ENCODE measurements at regions of chr22 and their contacts with region 1.

Region 1: DNA sequence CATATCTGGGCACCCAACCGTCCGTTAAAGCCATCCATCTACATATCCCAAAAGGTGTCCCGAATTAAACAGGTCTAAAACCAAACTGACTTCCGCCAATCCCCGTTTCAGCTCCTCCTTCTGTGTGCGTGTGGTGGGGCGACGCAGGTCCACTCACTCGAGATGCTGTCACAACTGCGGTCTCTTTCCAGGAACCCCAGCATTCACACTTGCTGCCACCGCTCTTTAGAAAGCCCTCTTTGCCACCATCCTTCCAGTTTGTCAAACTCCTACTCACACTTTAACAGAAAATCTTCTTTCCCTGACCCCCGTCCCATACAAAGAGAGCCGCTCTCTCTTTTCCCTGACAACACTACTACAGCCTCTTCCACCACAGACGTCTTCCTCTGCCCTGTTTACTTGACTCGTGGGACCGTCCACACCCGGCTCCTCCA is 467 bp downstream of the ESS2 start:
- DNase-seq: peak; percentile 48
- ATAC-seq: peak; percentile 27
- H3K4me3 Mint-ChIP-seq: peak overlapping the region; percentile 95
- H3K27ac Mint-ChIP-seq: peak overlapping the region; percentile 97
- H3K4me1 Mint-ChIP-seq: peaks cover 11% of the 10 kb centered on the region
- H3K27me3 Mint-ChIP-seq: peaks cover 31% of the 10 kb centered on the region

Region 2: DNA sequence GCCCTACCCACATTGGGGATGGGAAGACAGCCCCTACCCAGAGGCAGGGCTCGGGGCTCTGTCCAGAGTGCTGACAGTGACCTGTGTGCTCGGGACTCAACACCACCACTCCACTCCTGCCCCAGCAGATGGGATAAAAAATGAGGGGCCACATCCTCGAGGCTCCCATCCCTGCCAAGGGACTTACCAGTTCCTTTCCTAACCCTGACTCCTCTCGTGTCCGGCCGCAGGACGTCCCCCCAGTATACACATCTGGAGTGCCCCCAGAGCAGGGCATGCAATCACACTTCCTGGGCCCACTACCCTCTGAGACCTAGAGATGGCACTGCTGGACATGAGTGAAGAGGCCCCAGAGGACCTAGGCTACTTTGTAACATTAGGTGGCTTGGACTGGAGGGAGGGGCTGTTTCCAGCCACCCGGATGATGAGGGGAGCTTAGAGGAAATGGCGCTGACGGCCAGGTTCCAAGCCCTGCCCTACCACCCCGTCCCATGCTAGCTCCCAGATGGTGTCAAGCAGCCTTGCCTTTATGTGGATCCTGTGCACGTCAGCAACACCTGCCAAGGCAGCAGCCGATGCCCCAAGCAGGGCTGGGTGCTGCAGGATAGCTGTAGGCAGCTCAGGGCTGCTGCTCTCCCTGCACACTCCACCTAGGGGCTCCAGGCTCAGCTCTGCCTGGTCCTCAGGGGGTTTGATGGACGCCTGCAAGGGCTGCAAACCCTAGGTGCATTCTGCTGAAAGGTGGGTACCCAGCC is 108.3 kb before region 1 on chr22:
- POLR2A ChIA-PET with region 1: no interaction called
- DNase-seq: no peak
- ATAC-seq: no peak
- H3K4me3 Mint-ChIP-seq: no peak overlapping the region
- H3K27ac Mint-ChIP-seq: no peak overlapping the region
- H3K4me1 Mint-ChIP-seq: no peaks in the 10 kb centered on the region
- H3K27me3 Mint-ChIP-seq: peaks cover 4% of the 10 kb centered on the region

Region 3: GRCh38 chr22:19122143-19122751 is 21.7 kb before region 1 on chr22 and contains the start of gene DGCR2:
- POLR2A ChIA-PET with region 1: interaction called, 23 read pairs
- DNase-seq: peak; percentile 97
- ATAC-seq: peak; percentile 92
- H3K4me3 Mint-ChIP-seq: peak within 1 kb of the TSS; percentile 92
- H3K27ac Mint-ChIP-seq: peak within 1 kb of the TSS; percentile 85
- H3K4me1 Mint-ChIP-seq: peaks cover 34% of the 10 kb centered on the region
- H3K27me3 Mint-ChIP-seq: no peaks in the 10 kb centered on the region
- total RNA-seq, gene DGCR2: 38.0 to 38.3 TPM

Region 4: DNA sequence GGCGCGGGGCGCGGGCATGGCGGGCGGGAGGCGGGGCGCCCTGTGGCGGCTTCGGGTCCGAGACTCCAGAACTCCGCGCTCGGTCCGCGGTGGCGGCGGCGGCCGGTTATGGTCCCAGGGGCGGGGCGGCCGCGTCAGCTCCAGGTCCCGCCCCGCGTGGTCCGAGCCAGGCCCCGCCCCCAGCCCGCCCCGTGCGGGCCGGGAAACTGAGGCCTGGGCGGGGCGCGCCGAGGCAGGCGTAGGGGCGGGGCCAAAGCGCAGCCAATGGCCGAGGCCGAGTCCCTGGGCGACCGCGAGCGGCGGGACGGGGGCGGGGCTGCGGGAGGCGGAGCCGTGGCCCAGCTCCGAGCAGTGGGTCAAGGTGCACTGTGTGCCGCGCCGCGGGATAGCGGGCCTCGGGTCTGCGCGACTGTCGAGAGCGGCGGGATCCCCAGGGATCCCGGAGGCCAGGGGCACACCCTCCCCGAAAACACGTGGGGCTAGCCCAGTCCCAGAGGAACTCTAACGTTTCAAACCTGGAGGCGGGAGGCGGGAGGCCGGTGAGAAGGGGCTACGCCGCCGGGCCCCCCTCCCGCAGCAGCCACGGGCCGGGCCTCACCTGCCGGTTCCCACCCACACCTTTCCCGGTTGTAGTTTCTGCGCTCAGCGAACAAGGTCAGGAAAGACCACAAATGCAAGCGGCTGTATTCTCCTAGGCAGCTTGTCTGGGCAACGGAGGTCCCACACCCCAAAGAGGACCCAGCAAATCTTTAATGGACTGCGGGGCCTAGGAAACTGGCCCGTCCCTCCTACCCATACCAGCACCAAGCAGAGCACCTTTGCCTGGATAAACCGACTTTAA is 34.9 kb after region 1 on chr22 and contains the start of gene SLC25A1:
- POLR2A ChIA-PET with region 1: interaction called, 12 read pairs
- DNase-seq: peak; percentile 94
- ATAC-seq: peak; percentile 79
- H3K4me3 Mint-ChIP-seq: peak within 1 kb of the TSS; percentile 80
- H3K27ac Mint-ChIP-seq: peak within 1 kb of the TSS; percentile 48
- H3K4me1 Mint-ChIP-seq: peaks cover 22% of the 10 kb centered on the region
- H3K27me3 Mint-ChIP-seq: peaks cover 6% of the 10 kb centered on the region
- total RNA-seq, gene SLC25A1: 63.2 to 66.3 TPM

Measured in activated naive CD8-positive, alpha-beta T cell treated with anti-CD3 and anti-CD28 coated beads, Interleukin-2, amount 10 ng/mL, durations not matched to agents 7 days and 5 days (primary cell).